GM10248 (cell line): ENCODE measurements at regions of chr17 and their contacts with region 1.

Region 1: GRCh38 chr17:34321964-34322363 is 2.7 kb downstream of the CCL8 start:
- DNase-seq: no peak
- CTCF ChIP-seq: no peak

Region 2: GRCh38 chr17:34337701-34338100 is 15.7 kb after region 1 on chr17:
- CTCF ChIA-PET with region 1: interaction called, 10 read pairs
- POLR2A ChIA-PET with region 1: no interaction called
- DNase-seq: no peak
- CTCF ChIP-seq: no peak